Endothelial cell of umbilical vein (primary cell): ENCODE measurements at regions of chr20 and their contacts with region 1.

Region 1: GRCh38 chr20:7285918-7286556 is 518.6 kb downstream of the BMP2 start:
- DNase-seq: peak; percentile 88
- H3K4me3 ChIP-seq: no peak overlapping the region
- H3K27ac ChIP-seq: no peak overlapping the region
- H3K4me1 ChIP-seq: no peaks in the 10 kb centered on the region
- H3K27me3 ChIP-seq: peaks cover 0 to 2% of the 10 kb centered on the region in 2 experiments
- CTCF ChIP-seq: peak; percentile 86
- POLR2A ChIP-seq: no peak

Region 2: GRCh38 chr20:6142348-6142993 is 1143.6 kb before region 1 on chr20:
- CTCF ChIA-PET with region 1: interaction called, 5 read pairs
- POLR2A ChIA-PET with region 1: no interaction called
- dilution Hi-C with region 1: no loop called
- intact Hi-C with region 1: loop called (anchors 1 kb)
- DNase-seq: peak; percentile 64
- H3K4me3 ChIP-seq: no peak overlapping the region
- H3K27ac ChIP-seq: no peak overlapping the region
- H3K4me1 ChIP-seq: no peaks in the 10 kb centered on the region
- H3K27me3 ChIP-seq: peaks cover 0 to 10% of the 10 kb centered on the region in 2 experiments
- CTCF ChIP-seq: peak; percentile 58 to 68
- POLR2A ChIP-seq: no peak

Region 3: DNA sequence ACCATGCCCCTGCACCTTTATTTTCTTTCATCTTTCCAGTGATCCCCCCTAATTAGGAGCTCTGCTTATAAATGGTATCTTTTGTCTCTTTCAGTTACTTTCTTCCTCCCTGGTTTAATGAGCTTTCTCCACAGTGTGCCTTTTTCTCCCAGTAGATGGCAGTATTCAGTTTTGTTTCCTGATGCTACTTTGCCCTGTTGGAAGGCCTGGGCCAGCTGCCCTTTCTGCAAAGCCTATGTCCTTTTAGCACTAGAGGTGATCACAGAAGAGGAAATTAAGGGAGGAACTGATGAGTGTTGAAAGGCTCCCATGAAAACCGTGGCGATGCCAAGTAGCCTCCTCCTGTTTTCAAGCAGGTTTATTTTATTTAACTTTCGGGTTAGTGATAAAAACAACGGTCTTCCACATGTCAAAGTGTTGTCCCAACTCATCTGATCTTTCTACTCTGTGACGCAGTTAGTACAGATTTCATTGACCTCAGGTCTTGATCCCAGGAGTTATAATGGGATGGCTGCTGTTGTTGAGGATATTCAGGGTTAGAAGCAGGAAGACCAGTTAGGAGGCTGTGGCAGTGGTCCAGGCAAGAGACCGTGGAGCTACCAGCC is 702.8 kb before region 1 on chr20:
- CTCF ChIA-PET with region 1: interaction called, 19 read pairs
- POLR2A ChIA-PET with region 1: no interaction called
- dilution Hi-C with region 1: no loop called
- intact Hi-C with region 1: loop called (anchors 5 kb)
- DNase-seq: peak; percentile 78
- H3K4me3 ChIP-seq: no peak overlapping the region
- H3K27ac ChIP-seq: peak overlapping the region; percentile 24
- H3K4me1 ChIP-seq: peaks cover 15% of the 10 kb centered on the region
- H3K27me3 ChIP-seq: no peaks in the 10 kb centered on the region
- CTCF ChIP-seq: peak; percentile 56 to 61
- POLR2A ChIP-seq: no peak

Region 4: DNA sequence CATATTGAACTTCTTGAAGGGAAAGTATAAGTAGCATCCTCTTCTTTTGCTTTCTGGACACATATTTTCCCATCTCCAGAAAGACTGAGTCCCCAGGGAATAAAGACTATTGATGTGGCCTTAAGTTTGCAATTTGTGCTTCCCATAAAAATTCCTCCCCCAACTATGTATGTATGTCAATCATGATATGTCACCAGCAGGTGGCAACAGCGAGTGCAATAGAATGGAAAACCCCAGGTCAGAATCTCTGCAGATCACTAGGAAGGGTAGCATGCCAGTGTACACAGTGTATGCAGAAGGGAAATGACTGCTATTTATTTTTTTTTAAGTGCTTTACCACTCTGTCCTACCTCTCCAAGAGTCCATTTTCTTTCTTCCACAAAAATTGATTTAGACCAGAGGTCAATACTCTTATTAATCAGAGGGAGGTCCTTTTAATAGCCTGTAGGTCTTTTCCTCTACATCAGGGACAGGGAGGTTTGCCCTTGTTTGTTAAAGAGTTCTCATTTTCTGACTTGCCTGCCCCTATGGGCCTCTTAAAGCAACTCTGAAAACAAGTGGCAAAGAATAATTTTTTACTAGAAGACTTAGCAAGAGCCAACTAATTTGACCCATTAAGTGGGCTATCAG is 457.1 kb before region 1 on chr20:
- CTCF ChIA-PET with region 1: interaction called, 22 read pairs
- POLR2A ChIA-PET with region 1: no interaction called
- dilution Hi-C with region 1: no loop called
- intact Hi-C with region 1: loop called (anchors 2 kb)
- DNase-seq: peak; percentile 85
- H3K4me3 ChIP-seq: no peak overlapping the region
- H3K27ac ChIP-seq: no peak overlapping the region
- H3K4me1 ChIP-seq: no peaks in the 10 kb centered on the region
- H3K27me3 ChIP-seq: no peaks in the 10 kb centered on the region
- CTCF ChIP-seq: peak; percentile 56 to 59
- POLR2A ChIP-seq: no peak

Region 5: GRCh38 chr20:7195704-7196103 is 90.3 kb before region 1 on chr20:
- CTCF ChIA-PET with region 1: interaction called, 10 read pairs
- POLR2A ChIA-PET with region 1: no interaction called
- dilution Hi-C with region 1: no loop called
- intact Hi-C with region 1: no loop called
- DNase-seq: peak; percentile 83
- H3K4me3 ChIP-seq: no peak overlapping the region
- H3K27ac ChIP-seq: no peak overlapping the region
- H3K4me1 ChIP-seq: peaks cover 6% of the 10 kb centered on the region
- H3K27me3 ChIP-seq: no peaks in the 10 kb centered on the region
- CTCF ChIP-seq: no peak
- POLR2A ChIP-seq: no peak

Region 6: GRCh38 chr20:7272512-7272911 is 13.5 kb before region 1 on chr20:
- CTCF ChIA-PET with region 1: interaction called, 27 read pairs
- POLR2A ChIA-PET with region 1: no interaction called
- dilution Hi-C with region 1: no loop called
- intact Hi-C with region 1: no loop called
- DNase-seq: peak; percentile 15
- H3K4me3 ChIP-seq: no peak overlapping the region
- H3K27ac ChIP-seq: no peak overlapping the region
- H3K4me1 ChIP-seq: no peaks in the 10 kb centered on the region
- H3K27me3 ChIP-seq: no peaks in the 10 kb centered on the region
- CTCF ChIP-seq: no peak
- POLR2A ChIP-seq: no peak